IMR-90 (cell line): ENCODE measurements at regions of chr17 and their contacts with region 1.

Region 1: DNA sequence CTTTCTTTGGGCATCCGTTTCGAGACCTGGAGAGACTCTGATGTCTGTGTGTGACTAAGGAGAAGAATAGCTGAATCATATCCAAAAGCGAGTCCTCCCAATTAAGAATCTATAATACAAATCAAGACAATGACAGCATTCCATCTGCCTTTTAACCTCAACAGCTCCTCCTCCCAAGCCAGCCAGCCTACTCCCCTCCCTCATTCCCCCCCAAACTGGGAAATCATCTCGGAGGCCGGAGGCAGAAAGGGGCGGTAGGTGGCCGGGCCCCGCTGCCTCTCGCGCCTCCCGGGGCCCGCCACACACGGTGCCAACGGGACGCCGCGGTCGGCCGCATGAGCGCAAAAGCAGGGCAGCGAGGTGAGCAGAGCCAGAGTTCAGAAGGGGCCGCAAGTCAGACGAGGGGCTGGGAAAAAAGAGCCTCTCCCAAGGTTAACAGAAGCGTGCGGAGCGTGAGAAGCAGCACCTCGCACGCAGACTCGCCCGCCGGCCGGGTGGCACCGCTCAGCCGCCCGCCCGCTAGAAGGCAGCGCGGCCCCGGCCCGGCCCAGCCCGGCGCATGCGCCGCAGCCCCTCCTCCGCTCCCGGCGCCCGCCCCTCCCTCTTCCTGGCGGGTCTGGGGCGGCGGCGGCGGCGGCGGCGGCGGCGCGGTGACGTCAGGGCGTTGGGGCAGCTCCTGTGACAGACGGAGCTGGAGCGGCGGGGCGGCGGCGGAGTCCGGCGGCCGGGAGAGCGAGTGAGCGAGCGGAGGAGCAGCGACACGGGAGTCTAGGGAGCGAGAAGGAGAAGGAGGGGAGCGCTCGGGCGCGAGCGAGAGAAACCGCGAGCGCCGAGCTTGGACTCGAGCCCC is at the start of gene PAFAH1B1:
- DNase-seq: peak; percentile 72
- ATAC-seq: peak; percentile 86
- H3K4me3 ChIP-seq: peak within 1 kb of the TSS; percentile 99
- H3K27ac ChIP-seq: peak within 1 kb of the TSS; percentile 99
- H3K4me1 ChIP-seq: peaks cover 2% of the 10 kb centered on the region; the same call in 1 of the 2 replicates
- H3K27me3 ChIP-seq: no peaks in the 10 kb centered on the region
- CTCF ChIP-seq: peak; percentile 21; the same call in 1 of the 2 replicates
- POLR2A ChIP-seq: peak; percentile 89
- RAD21 ChIP-seq: no peak
- total RNA-seq, gene PAFAH1B1: 121 and 127 TPM in 2 replicates

Region 2: DNA sequence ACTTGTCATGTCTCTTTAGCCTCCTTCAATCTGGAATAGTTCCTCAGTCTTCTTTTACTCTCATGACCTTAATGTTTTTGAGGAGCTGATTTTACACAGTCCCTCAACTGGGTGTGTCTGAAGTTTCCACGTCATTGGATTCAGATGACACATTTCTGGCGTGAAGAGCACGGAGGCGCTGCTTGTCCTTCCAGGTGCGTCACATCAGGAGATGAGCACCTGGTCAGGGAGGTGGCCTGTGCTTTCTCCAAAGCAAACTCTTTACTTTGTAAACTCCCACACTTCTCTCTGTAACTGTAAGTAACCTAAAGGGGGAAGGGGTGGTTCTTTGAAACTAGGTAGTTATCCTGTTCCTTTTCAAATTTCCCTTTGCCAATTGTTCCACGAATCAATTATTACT is 139.9 kb before region 1 on chr17:
- CTCF ChIA-PET with region 1: no interaction called
- POLR2A ChIA-PET with region 1: no interaction called
- dilution Hi-C with region 1: no loop called
- in situ Hi-C with region 1: no loop called
- intact Hi-C with region 1: loop called (anchors 10 kb)
- DNase-seq: no peak
- ATAC-seq: no peak
- H3K4me3 ChIP-seq: no peak overlapping the region
- H3K27ac ChIP-seq: no peak overlapping the region
- H3K4me1 ChIP-seq: peaks cover 3% of the 10 kb centered on the region; the same call in 1 of the 2 replicates
- H3K27me3 ChIP-seq: no peaks in the 10 kb centered on the region
- CTCF ChIP-seq: no peak
- POLR2A ChIP-seq: no peak
- RAD21 ChIP-seq: no peak

Region 3: GRCh38 chr17:2511462-2512369 is 81.5 kb before region 1 on chr17 and contains the start of gene METTL16:
- CTCF ChIA-PET with region 1: no interaction called
- POLR2A ChIA-PET with region 1: no interaction called
- dilution Hi-C with region 1: no loop called
- in situ Hi-C with region 1: no loop called
- intact Hi-C with region 1: loop called (anchors 2 kb)
- DNase-seq: peak; percentile 99
- ATAC-seq: peak; percentile 99
- H3K4me3 ChIP-seq: peak within 1 kb of the TSS; percentile 66
- H3K27ac ChIP-seq: peak within 1 kb of the TSS; percentile 83
- H3K4me1 ChIP-seq: no peaks in the 10 kb centered on the region; the same call in 1 of the 2 replicates
- H3K27me3 ChIP-seq: no peaks in the 10 kb centered on the region
- CTCF ChIP-seq: no peak
- POLR2A ChIP-seq: peak; percentile 93
- RAD21 ChIP-seq: no peak; the same call in 1 of the 2 replicates
- total RNA-seq, gene METTL16: 15.4 and 15.8 TPM in 2 replicates

Region 4: DNA sequence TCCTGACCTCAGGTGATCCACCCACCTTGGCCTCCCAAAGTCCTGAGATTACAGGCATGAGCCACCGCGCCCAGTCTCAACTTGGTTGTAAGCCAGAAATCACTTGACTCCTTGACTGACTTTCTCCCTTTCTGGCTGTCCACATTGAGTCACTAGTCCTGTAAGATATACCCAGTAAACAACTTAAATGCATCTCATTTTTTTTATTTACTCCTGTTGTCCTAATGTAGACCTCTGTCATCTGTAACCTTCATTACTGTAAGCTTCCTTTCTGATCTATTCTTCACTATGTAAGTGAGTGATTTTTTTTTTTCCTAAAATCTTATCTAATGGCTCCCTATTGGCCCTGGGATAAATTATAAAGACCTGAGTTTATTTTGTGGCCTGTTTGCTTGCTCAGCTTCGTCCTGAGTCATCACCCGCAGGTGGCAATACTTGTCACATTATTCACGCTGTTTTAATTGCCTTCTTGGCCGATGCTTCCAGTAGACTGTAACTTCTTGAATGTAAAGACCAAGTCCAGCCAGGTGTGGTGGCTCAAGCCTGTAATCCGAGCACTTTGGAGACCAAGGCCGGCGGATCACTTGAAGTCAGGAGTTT is 41.3 kb after region 1 on chr17:
- CTCF ChIA-PET with region 1: no interaction called
- POLR2A ChIA-PET with region 1: no interaction called
- dilution Hi-C with region 1: no loop called
- in situ Hi-C with region 1: no loop called
- intact Hi-C with region 1: loop called (anchors 5 kb)
- DNase-seq: peak; percentile 25
- ATAC-seq: no peak
- H3K4me3 ChIP-seq: no peak overlapping the region
- H3K27ac ChIP-seq: no peak overlapping the region
- H3K4me1 ChIP-seq: peaks cover 3% of the 10 kb centered on the region
- H3K27me3 ChIP-seq: no peaks in the 10 kb centered on the region
- CTCF ChIP-seq: no peak
- POLR2A ChIP-seq: no peak
- RAD21 ChIP-seq: no peak

Region 5: DNA sequence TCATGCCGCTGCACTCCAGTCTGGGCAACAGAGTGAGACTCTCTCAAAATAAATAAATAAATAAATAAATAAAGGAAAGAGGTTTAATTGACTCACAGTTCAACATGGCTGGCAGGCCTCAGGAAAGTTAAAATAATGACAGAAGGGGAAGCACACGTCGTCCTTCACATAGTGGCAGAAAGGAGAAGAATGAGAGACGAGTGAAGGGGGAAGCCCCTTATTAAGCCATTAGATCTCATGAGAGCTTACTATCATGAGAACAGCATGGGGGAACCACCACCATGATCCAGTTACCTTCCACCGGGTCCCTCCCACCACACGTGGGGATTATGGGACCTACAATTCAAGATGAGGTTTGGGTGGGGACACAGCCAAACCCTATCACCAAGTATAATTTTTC is 54.8 kb after region 1 on chr17:
- CTCF ChIA-PET with region 1: no interaction called
- POLR2A ChIA-PET with region 1: no interaction called
- dilution Hi-C with region 1: no loop called
- in situ Hi-C with region 1: no loop called
- intact Hi-C with region 1: no loop called
- DNase-seq: no peak
- ATAC-seq: no peak
- H3K4me3 ChIP-seq: no peak overlapping the region
- H3K27ac ChIP-seq: no peak overlapping the region
- H3K4me1 ChIP-seq: no peaks in the 10 kb centered on the region
- H3K27me3 ChIP-seq: no peaks in the 10 kb centered on the region
- CTCF ChIP-seq: no peak
- POLR2A ChIP-seq: no peak
- RAD21 ChIP-seq: no peak

Region 6: GRCh38 chr17:2672026-2672425 is 78.8 kb after region 1 on chr17:
- CTCF ChIA-PET with region 1: no interaction called
- POLR2A ChIA-PET with region 1: no interaction called
- dilution Hi-C with region 1: no loop called
- in situ Hi-C with region 1: no loop called
- intact Hi-C with region 1: loop called (anchors 5 kb)
- DNase-seq: no peak
- ATAC-seq: no peak
- H3K4me3 ChIP-seq: no peak overlapping the region
- H3K27ac ChIP-seq: no peak overlapping the region
- H3K4me1 ChIP-seq: no peaks in the 10 kb centered on the region
- H3K27me3 ChIP-seq: no peaks in the 10 kb centered on the region
- CTCF ChIP-seq: no peak
- POLR2A ChIP-seq: no peak
- RAD21 ChIP-seq: no peak